ENCODE measurements at regions of chr2 and their contacts with region 1.

Region 1: GRCh38 chr2:85420536-85421259 is 2.2 kb downstream of the SH2D6 start:
- DNase-seq: peak; percentile 97
- H3K4me3 ChIP-seq: peak overlapping the region in 2 of 8 donors; percentile 14 to 54
- H3K27ac ChIP-seq: peak overlapping the region in 7 of 8 donors; percentile 18 to 99 (median 60)
- H3K4me1 ChIP-seq: peaks cover 21 to 52% (median 34%) of the 10 kb centered on the region in 6 donors
- H3K27me3 ChIP-seq: no peaks in the 10 kb centered on the region
- CTCF ChIP-seq: peak; percentile 99 to 100 (median 100)
- POLR2A ChIP-seq: no peak

Region 2: DNA sequence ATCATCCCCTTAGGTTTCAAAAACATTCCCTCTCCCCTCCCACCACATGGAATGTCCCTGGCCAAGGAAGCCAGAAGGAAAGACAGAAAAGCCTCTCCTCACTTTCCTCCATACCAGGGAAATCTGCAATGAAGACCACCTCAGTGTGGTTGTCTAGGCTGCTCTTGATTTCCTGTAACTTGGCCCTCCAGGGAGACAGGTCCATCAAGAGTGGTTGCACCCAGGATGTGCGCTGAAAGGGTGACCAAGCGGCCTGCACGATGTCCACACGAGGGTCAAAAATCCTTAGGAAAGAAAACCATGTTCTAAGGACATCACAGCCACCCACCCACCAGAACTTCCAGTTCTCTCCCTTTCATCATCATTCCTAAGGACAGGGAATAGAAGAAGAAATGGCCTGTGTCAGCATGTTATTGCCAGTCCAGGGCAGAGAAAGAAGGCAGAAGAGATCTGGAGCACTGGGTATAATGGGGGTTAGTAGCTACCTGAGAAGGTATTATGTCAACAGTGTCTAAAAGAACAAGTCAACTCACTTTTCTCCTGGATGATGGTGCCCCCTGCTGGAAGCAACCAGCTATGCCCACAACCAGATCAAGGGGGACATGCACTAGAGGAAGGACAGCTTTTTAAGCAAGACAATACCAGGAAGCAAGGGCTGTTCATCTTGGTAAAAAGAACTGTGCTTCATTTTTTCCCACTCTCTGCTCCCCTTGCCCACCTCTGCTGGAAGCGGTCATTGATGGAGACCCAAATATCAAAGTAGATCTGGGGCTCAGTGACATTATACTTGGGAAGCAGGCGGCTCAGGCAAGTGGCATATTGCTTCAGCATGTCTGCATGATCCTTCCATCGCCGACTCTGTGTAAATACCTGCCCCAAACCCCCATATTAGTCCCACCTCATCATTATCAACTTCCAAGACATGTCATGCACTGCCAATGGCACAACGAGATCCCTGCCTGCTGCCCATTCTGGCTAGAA is 131.3 kb after region 1 on chr2:
- intact Hi-C with region 1: loop called (anchors 2 kb)
- DNase-seq: peak; percentile 91
- H3K4me3 ChIP-seq: no peak overlapping the region
- H3K27ac ChIP-seq: peak overlapping the region in 4 of 8 donors; percentile 37 to 71 (median 70)
- H3K4me1 ChIP-seq: peaks cover 2 to 30% (median 16%) of the 10 kb centered on the region in 6 donors
- H3K27me3 ChIP-seq: no peaks in the 10 kb centered on the region
- CTCF ChIP-seq: peak; percentile 94 to 98 (median 97)
- POLR2A ChIP-seq: no peak

Measured in spleen (tissue), 13 donors.